Lower lobe of right lung (tissue), 2 donors: ENCODE measurements at regions of chr10 and their contacts with region 1.

Region 1: DNA sequence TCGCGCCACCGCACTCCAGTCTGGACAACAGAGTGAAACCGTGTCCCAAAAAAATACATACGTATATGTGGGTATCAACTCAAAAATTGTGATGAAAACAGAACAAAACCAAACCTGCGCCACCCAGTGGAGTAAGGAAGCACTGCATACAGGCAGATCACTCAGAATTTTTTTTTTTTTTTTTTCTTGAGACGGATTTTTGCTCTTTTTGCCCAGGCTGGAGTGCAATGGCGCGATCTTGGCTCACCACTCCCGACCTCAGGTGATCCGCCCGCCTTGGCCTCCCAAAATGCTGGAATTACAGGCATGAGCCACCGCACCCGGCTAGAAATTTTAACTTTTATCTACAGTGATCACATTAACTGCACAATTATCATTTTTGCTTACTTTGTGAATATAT is 9.1 kb upstream of the TMEM236 start:
- DNase-seq: peak; percentile 70
- ATAC-seq: peak; percentile 54 to 78
- H3K4me3 ChIP-seq: no peak overlapping the region
- H3K27ac ChIP-seq: no peak overlapping the region
- H3K4me1 ChIP-seq: peaks cover 13% of the 10 kb centered on the region
- H3K27me3 ChIP-seq: no peaks in the 10 kb centered on the region
- CTCF ChIP-seq: peak; percentile 84

Region 2: DNA sequence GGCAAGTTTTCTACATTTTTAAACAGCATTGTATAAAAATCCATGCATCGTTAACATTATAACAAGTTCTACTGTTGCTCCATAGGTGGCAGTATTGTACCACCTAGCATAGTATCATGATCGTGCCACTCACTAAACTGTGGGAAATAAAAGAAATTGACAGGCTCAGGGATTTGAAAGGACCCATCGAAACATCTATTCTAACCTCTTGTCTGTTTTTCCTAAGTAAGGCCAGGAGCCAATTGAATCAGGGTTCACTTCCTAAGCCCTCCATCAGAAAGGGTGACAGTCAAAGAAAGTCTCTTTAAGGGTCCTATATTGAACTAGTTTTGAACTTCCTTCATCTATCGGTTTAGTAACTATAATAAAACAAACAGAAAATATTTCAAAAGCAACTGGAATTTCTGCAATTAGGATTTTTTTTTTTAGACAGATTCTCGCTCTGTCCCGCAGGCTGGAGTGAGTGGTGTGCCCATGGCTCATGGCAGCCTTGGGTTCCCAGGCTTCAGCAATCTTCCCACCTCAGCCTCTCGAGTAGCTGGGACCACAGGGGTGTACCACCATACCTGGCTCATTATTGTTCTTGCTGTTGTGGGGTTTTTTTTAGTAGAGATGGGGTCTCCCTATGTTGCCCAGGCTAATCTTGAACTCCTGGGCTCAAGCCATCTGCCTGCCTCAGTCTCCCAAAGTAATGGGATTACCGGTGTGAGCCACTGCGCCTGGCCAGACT is 135.2 kb before region 1 on chr10:
- intact Hi-C with region 1: loop called (anchors 10 kb)
- DNase-seq: no peak
- ATAC-seq: peak; percentile 89 to 91
- H3K4me3 ChIP-seq: no peak overlapping the region
- H3K27ac ChIP-seq: no peak overlapping the region
- H3K4me1 ChIP-seq: peaks cover 4% of the 10 kb centered on the region
- H3K27me3 ChIP-seq: no peaks in the 10 kb centered on the region
- CTCF ChIP-seq: peak; percentile 74